ENCODE measurements at regions of chr12 and their contacts with region 1.

Region 1: DNA sequence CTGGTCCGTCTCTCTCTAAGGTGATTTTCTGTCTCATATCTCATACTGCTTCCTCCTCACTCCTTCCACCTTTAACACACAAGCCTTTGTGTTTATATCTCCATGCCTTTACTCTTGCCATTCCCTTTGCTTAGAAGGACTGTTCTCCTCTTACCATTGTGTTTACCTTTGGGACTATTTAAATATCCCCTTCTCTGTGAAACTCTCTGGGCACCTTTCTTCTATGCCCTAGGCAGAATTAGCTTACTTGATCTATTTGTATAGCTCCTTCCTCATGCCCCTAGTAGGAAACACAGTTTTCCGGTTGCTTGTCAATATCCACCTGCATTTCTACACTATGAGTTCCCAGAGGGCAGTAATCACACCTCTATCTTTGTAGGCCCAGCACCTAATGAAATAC is 3.9 kb upstream of the AMHR2 start:
- DNase-seq: no peak
- H3K4me3 ChIP-seq: no peak overlapping the region
- H3K27ac ChIP-seq: no peak overlapping the region
- H3K4me1 ChIP-seq: peaks cover 0 to 11% of the 10 kb centered on the region in 2 donors
- H3K27me3 ChIP-seq: no peaks in the 10 kb centered on the region
- CTCF ChIP-seq: no peak
- POLR2A ChIP-seq: no peak

Region 2: DNA sequence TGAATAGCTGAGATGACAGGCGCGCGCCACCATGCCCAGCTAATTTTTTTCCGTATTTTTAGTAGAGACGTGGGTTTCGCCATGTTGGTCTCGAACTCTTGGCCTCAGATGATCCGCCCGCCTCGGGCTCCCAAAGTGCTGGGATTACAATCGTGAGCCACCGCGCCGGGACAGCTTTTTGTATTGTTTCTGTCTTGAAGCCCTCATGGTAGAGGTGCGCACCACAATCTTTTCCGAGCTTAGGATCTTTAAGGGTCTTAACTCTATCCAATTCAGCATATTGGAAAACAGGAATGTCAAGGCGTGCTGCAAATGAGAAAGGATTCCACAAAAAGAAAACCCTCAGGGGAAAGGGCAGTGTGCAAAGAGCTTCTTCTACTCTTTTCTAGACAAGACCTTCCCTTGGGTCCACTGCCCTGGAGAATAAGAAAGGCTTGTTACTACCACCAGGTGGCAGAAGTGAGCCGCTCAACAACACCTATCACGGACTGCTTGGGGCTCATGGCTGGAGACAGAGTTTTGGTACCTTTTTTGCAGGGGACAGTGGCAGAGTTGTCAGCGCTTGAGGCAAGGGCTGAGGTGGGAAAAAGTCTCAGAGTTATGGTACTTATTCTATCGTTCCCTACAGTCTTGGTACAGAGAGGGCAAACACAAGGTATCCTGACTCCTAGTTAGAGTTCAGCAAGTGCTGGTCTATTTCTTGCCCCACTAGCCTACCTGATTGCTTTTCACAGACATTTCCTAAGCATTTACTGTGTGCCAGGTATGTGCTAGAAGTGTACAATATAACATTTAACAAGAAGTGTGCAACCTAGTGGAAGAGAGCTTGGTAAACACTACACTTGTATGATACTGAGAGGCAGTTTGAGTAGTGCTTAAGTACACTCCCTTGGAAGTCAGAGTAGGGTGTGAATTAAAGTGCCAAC is 67.2 kb before region 1 on chr12:
- intact Hi-C with region 1: loop called (anchors 2 kb)
- DNase-seq: peak; percentile 84 to 90
- H3K4me3 ChIP-seq: no peak overlapping the region
- H3K27ac ChIP-seq: peak overlapping the region in 2 of 3 donors; percentile 23 to 82
- H3K4me1 ChIP-seq: peaks cover 4 to 8% of the 10 kb centered on the region in 2 donors
- H3K27me3 ChIP-seq: no peaks in the 10 kb centered on the region
- CTCF ChIP-seq: peak; percentile 80 to 95 (median 86)
- POLR2A ChIP-seq: no peak

Measured in thyroid gland (tissue), 4 donors.